Head of caudate nucleus (tissue), 42 donors: ENCODE measurements at regions of chr18 and their contacts with region 1.

Region 1: GRCh38 chr18:3281456-3282400 is 19.8 kb downstream of the MYL12B start:
- DNase-seq: peak in 2 of 42 donors; percentile 13 to 48

Region 2: DNA sequence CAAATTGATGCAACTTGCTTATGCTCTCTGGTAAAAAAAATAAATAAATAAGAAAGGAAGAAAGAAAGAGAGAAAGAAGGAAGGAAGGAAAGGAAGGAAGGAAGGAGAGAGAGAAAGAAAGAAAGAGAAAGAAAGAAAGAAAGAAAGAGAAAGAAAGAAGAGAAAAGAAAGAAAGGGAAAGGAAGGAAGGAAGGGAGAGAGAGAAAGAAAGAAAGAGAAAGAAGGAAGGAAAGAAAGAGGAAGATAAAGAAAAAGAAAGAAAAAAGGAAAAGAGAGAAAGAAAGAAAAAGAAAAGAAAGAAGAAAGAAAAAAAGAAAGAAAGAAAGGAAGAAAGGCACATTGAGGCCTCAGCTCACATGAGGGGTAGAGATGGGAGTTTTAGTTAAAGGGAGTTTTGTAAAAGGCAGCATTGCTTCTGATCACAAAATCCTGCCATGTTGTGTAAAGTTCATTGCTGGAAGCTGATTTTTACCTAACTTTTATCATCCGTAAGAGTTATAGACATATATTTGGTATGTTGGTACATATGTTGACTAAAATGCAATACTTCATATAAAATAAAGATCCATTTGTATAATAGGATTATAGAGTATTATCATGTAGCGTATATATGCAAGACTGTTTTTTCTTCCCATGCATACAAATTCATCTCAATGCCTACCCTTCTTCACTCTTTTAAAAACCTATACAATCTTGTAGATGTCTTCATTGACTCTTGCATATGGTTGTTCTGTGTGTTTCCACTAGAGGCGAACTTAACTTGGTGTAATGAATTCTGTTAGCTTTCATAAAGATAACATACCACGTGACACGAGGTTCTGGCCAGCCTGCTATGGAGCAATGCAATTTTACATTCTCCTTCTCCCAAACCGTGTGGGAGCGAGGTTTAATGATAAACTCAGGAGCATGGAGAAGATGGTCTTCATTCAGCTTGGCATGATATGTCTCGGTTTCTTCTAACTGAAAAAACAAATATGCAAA is 94.8 kb before region 1 on chr18:
- intact Hi-C with region 1: no loop called
- DNase-seq: no peak

Region 3: DNA sequence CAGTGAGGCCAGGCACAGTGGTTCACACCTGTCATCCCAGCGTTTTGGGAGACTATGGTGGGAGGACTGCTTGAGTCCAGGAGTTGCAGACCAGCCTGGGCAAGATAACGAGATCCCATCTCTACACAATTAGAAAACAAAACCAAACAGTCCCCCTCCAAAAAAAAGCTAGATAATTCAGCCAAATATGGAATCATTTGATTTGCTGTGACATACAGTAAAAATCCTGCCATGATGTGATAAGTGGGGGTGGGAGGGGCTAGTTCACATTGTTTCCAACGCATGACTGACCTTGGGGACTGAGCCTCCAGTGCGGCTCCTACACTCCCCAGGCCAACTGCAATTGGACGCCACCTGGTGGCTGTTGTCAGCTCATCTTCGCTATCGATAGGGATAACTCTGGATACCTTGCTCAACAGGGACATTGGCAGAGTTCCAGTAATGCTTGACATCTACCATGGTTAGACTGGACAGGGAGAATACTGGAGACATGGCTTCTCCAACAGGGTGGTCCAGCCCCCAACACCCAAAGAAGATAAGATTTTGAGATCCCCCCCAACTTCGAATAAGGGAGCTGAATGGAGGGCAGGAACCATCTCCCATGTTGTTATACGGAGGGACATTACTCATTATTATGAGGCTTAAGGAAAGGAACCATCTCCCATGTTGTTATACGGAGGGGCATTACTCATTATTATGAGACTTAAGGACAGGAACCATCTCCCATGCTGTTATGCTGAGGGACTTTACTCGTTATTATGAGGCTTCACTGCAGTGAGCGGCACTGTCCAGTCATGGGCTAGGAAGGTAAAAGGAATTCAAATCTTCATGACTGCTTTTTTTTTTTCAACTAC is 304.2 kb after region 1 on chr18:
- intact Hi-C with region 1: loop called (anchors 2 kb)
- DNase-seq: peak in 41 of 42 donors; percentile 60 to 91 (median 78)

Region 4: DNA sequence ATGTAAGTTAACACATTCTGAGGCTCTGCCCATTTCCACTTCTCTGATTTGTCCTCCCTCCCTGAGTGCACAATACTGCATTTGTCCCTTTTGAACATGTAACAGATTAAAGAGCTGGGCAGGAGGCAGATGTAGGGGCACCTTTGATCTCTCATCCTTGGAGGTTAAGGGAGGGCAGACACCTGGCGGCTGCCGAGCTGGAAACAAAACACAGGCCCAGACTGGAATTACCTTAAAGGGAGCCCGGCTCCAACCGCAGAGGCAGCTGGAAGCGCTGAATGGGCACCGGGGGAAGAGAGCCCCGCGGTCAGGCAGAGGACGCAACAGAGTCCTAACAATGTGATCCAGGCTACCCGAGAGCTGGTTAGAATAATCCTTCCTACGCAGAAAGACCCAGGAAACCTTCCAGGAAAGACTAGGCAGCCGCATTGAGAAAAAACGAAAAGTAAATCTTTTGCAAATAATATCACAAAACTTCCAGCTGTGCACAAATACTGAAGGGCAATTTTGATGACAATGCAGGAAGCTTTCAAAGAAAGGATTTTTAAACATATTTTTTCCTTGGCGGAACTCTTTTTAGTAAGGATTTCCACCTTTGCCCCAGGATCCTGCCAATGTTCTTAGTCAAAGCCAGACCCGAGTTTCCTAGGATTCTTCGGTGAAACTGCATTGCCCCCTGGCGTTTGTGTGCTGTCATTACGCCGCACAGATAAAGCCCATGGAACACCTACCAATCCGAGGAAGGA is 384.2 kb after region 1 on chr18:
- intact Hi-C with region 1: loop called (anchors 5 kb)
- DNase-seq: peak; percentile 60 to 95 (median 86)